ENCODE measurements at regions of chr10 and their contacts with region 1.

Region 1: DNA sequence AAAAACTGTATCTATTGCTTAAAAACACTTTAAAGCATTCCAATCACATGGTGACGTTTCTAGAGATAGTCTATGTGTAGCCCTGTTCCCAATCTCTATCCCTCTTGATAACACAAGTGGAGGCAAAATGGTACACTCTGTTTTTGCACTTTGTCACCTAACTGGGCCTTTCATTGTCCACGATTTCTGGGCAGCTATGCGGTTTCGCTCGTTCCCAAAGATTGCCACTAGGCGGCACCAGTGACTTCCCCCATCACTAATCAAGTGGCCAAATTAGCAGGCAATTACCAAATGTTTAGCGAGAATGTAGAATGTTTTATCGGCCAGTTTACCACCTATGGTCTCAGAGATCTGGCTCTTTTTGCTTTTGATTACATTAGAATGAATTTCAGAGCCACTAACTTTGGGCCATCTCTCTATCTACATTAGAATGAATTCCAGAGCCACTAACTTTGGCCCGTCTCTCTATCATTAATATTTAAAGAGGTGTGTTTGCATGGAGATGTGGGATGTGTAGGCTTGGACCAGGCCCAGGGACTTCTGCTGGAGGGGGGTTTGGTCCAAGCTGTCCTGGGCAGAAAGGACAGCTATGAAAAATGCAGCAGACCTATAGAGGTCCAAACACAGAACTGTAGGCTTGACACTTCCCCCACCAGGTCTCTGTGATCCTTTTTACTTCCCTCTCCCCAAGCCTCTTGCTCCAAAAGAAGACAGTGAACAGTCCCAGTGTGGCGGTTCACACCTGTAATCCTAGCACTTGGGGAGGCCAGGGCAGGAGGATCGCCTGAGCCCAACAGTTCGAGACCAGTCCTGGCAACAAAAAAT is 90.1 kb downstream of the EPC1 start:
- DNase-seq: peak; percentile 72
- H3K4me3 Mint-ChIP-seq: no peak overlapping the region
- H3K27ac Mint-ChIP-seq: no peak overlapping the region
- H3K4me1 Mint-ChIP-seq: peaks cover 16% of the 10 kb centered on the region
- H3K27me3 Mint-ChIP-seq: no peaks in the 10 kb centered on the region

Region 2: GRCh38 chr10:32149252-32149955 is 107.4 kb before region 1 on chr10:
- CTCF ChIA-PET with region 1: no interaction called
- POLR2A ChIA-PET with region 1: no interaction called
- DNase-seq: peak; percentile 18
- H3K4me3 Mint-ChIP-seq: no peak overlapping the region
- H3K27ac Mint-ChIP-seq: peak overlapping the region; percentile 63
- H3K4me1 Mint-ChIP-seq: peaks cover 41% of the 10 kb centered on the region
- H3K27me3 Mint-ChIP-seq: no peaks in the 10 kb centered on the region

Region 3: GRCh38 chr10:32160864-32161263 is 96.0 kb before region 1 on chr10:
- CTCF ChIA-PET with region 1: no interaction called
- POLR2A ChIA-PET with region 1: no interaction called
- DNase-seq: no peak
- H3K4me3 Mint-ChIP-seq: no peak overlapping the region
- H3K27ac Mint-ChIP-seq: no peak overlapping the region
- H3K4me1 Mint-ChIP-seq: no peaks in the 10 kb centered on the region
- H3K27me3 Mint-ChIP-seq: peaks cover 2% of the 10 kb centered on the region

Region 4: DNA sequence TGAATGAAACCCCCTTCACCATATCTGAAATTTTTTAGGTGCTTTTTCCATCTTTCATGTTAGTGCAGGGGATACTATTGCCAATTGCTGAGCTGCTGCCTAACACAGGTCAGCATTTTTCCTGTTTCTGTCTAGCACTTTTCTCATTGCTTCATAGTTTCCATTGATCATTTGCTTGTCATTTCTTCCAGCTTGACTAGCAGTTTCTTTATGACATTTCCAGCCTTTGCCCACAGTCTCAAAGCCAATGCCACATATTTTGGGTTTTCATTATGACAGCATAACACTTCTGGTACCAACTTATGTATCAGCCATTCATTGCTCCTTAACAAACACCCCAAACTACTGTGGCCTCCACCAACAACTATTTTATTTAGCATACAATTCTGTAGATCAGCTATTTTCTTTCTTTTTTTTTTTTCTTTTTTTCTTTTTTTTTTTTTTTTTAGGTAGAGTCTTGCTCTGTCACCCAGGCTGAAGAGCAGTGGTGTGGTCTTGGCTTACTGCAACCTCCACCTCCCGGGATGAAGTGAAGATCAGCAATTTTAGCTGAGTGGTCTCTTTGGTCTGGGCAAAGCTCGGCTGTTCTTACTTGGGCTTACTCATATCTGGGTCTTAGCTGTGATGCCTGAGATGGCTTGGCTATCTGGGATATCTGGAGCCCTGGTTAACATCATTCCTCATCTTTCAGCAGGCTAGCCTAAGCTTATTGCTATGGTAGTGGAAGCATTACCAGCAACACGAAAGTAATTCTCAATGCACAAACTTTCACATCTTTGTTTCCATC is 12.2 kb before region 1 on chr10:
- CTCF ChIA-PET with region 1: interaction called, 22 read pairs
- POLR2A ChIA-PET with region 1: no interaction called
- DNase-seq: peak; percentile 11
- H3K4me3 Mint-ChIP-seq: no peak overlapping the region
- H3K27ac Mint-ChIP-seq: no peak overlapping the region
- H3K4me1 Mint-ChIP-seq: peaks cover 18% of the 10 kb centered on the region
- H3K27me3 Mint-ChIP-seq: no peaks in the 10 kb centered on the region

Measured in activated CD4-positive, alpha-beta T cell treated with anti-CD3 and anti-CD28 coated beads, Interleukin-2, amount 10 ng/mL, durations not matched to agents 7 days and 5 days (primary cell).